ENCODE measurements at regions of chr2 and their contacts with region 1.

Region 1: GRCh38 chr2:161913865-161914264 is 160.2 kb downstream of the DPP4 start:
- DNase-seq: no peak
- ATAC-seq: no peak
- H3K4me3 ChIP-seq: no peak overlapping the region
- H3K4me3 Mint-ChIP-seq: no peak overlapping the region
- H3K27ac ChIP-seq: no peak overlapping the region
- H3K27ac Mint-ChIP-seq: no peak overlapping the region
- H3K4me1 ChIP-seq: no peaks in the 10 kb centered on the region
- H3K4me1 Mint-ChIP-seq: peaks cover 0 to 3% (median 0%) of the 10 kb centered on the region in 3 donors
- H3K27me3 ChIP-seq: peaks cover 0 to 3% of the 10 kb centered on the region in 2 experiments
- H3K27me3 Mint-ChIP-seq: peaks cover 0 to 4% of the 10 kb centered on the region in 2 donors

Region 2: DNA sequence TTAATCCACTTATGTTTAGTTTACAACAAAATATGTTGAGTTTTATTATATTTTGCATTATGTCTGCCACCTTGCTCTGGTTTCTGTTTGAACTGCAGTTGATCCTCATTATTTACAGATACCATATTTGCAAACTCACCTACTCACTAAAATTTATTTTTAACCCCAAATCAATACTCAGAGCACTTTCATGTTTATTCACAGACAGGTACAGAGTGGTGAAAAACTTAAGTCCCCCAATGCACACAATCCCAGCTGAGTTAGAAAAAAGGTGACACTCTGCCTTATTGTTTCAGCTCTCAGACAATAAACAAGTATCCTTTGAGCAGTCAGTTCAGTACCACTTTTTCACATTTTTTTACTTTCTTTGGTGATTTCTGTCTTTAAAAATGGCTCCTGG is 224.4 kb after region 1 on chr2:
- CTCF ChIA-PET with region 1: no interaction called
- POLR2A ChIA-PET with region 1: interaction called in 1 of 2 experiments, 13 read pairs
- DNase-seq: no peak
- ATAC-seq: no peak
- H3K4me3 ChIP-seq: no peak overlapping the region
- H3K4me3 Mint-ChIP-seq: no peak overlapping the region
- H3K27ac ChIP-seq: no peak overlapping the region
- H3K27ac Mint-ChIP-seq: no peak overlapping the region
- H3K4me1 ChIP-seq: no peaks in the 10 kb centered on the region
- H3K4me1 Mint-ChIP-seq: no peaks in the 10 kb centered on the region
- H3K27me3 ChIP-seq: peaks cover 0 to 5% of the 10 kb centered on the region in 2 experiments
- H3K27me3 Mint-ChIP-seq: peaks cover 22 to 31% of the 10 kb centered on the region in 2 donors